Activated T-helper 1 cell treated with anti-CD3 and anti-CD28 coated beads, Interleukin-12 subunit alpha, Interleukin-12 subunit beta, Interleukin-2, Interleukin-4 antibody, amounts not matched to agents 30 ng/mL and 10 ng/mL and 1 ng/mL, durations not matched to agents 14 hours and 24 hours and 36 hours (primary cell): ENCODE measurements at regions of chrX and their contacts with region 1.

Region 1: GRCh38 chrX:44542567-44543325 is at the start of gene FUNDC1:
- DNase-seq: peak; percentile 82
- H3K4me3 Mint-ChIP-seq: peak within 1 kb of the TSS; percentile 92
- H3K27ac Mint-ChIP-seq: peak within 1 kb of the TSS; percentile 94
- H3K4me1 Mint-ChIP-seq: peaks cover 10% of the 10 kb centered on the region
- H3K27me3 Mint-ChIP-seq: peaks cover 1% of the 10 kb centered on the region
- total RNA-seq, gene FUNDC1: 11.2 and 12.5 TPM in 2 replicates

Region 2: GRCh38 chrX:44343412-44344141 is 199.2 kb before region 1 on chrX and contains the start of gene EFHC2:
- intact Hi-C with region 1: loop called (anchors 10 kb)
- DNase-seq: peak; percentile 17
- H3K4me3 Mint-ChIP-seq: peak within 1 kb of the TSS; percentile 83
- H3K27ac Mint-ChIP-seq: peak within 1 kb of the TSS; percentile 83
- H3K4me1 Mint-ChIP-seq: peaks cover 19% of the 10 kb centered on the region
- H3K27me3 Mint-ChIP-seq: no peaks in the 10 kb centered on the region
- total RNA-seq, gene EFHC2: not detected in 2 replicates

Region 3: DNA sequence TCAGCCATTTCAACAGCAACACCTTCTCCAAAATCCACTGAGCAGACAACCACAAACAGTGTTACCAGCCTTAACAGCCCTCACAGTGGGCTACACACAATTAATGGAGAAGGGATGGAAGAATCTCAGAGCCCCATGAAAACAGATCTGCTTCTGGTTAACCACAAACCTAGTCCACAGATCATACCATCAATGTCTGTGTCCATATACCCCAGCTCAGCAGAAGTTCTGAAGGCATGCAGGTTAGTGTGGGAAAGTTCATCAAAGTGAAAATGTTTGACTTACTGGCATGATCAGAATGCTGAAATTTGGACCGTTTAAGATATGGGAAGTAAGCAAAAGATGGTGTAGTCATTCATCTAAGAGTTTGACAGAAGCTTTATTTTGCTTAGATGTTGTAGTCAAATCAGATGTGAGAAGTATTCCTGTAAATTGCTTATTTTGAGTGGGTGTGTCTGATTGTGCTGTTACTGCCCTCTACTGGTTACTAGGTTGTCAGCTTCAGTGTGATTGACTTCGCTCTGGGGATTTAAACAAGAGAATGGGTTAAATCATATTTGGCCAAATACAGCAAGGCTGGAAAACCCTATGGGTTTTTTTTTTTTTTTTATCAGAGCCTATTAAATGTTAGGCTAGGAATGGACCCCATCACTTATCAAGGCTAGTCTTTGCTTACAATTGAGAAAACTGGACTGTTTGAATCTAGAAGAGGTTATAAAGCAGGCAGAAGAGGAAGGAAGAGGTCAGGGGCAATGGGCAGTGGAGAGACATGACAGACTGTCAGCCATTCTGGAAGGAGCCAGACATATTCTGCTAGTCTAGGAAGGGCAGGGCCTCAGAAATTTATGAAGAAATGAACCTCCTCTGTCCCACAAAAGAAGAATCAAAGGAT is 527.6 kb after region 1 on chrX:
- intact Hi-C with region 1: loop called (anchors 10 kb)
- DNase-seq: no peak
- H3K4me3 Mint-ChIP-seq: no peak overlapping the region
- H3K27ac Mint-ChIP-seq: peak overlapping the region; percentile 63
- H3K4me1 Mint-ChIP-seq: peaks cover 44% of the 10 kb centered on the region
- H3K27me3 Mint-ChIP-seq: no peaks in the 10 kb centered on the region